Pancreas (tissue), 10 donors: ENCODE measurements at regions of chr3 and their contacts with region 1.

Region 1: GRCh38 chr3:37024092-37024491 is 30.8 kb downstream of the MLH1 start:
- DNase-seq: no peak
- ATAC-seq: peak in 1 of 4 donors; percentile 38
- H3K4me3 ChIP-seq: no peak overlapping the region
- H3K27ac ChIP-seq: no peak overlapping the region
- H3K4me1 ChIP-seq: no peaks in the 10 kb centered on the region
- H3K27me3 ChIP-seq: no peaks in the 10 kb centered on the region
- CTCF ChIP-seq: no peak

Region 2: GRCh38 chr3:36911990-36912804 is 111.9 kb before region 1 on chr3:
- intact Hi-C with region 1: no loop called
- DNase-seq: no peak
- ATAC-seq: peak; percentile 47 to 85 (median 73)
- H3K4me3 ChIP-seq: peak overlapping the region in 1 of 4 donors; percentile 11
- H3K27ac ChIP-seq: peak overlapping the region in 2 of 4 donors; percentile 40 to 65
- H3K4me1 ChIP-seq: peaks cover 0 to 7% (median 0%) of the 10 kb centered on the region in 3 donors
- H3K27me3 ChIP-seq: no peaks in the 10 kb centered on the region
- CTCF ChIP-seq: no peak

Region 3: DNA sequence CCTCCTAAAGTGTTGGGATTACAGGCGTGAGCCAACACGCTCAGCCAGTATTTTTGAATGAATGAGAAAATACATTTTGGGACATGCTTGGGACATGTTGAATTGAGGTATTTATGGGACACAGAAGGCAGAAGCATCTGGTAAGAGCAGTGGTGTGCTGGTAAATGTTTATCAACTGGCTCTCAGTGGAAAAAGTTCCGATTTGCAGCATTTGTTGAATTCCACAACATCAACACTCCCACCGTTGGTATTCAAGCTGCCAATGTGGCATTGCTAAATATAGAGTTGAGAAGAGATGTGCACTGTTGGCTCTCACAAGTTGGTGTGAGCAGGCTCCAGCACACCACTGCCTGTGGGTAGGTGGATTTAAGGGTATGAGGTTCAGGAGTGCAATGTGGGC is 186.1 kb after region 1 on chr3:
- intact Hi-C with region 1: loop called in 1 of 3 experiments (anchors 10 kb)
- DNase-seq: no peak
- ATAC-seq: no peak
- H3K4me3 ChIP-seq: no peak overlapping the region
- H3K27ac ChIP-seq: no peak overlapping the region
- H3K4me1 ChIP-seq: no peaks in the 10 kb centered on the region
- H3K27me3 ChIP-seq: no peaks in the 10 kb centered on the region
- CTCF ChIP-seq: no peak